Heart left ventricle (tissue), 16 donors: ENCODE measurements at regions of chr4 and their contacts with region 1.

Region 1: GRCh38 chr4:77052352-77052751 is 23.4 kb downstream of the CCNI start:
- DNase-seq: peak in 2 of 5 donors; percentile 36 to 43
- ATAC-seq: peak in 2 of 4 donors; percentile 36 to 38
- H3K4me3 ChIP-seq: no peak overlapping the region
- H3K27ac ChIP-seq: no peak overlapping the region
- H3K4me1 ChIP-seq: peaks cover 0 to 11% (median 2%) of the 10 kb centered on the region in 12 donors
- H3K27me3 ChIP-seq: no peaks in the 10 kb centered on the region
- CTCF ChIP-seq: peak; percentile 21 to 61 (median 42)
- POLR2A ChIP-seq: no peak

Region 2: DNA sequence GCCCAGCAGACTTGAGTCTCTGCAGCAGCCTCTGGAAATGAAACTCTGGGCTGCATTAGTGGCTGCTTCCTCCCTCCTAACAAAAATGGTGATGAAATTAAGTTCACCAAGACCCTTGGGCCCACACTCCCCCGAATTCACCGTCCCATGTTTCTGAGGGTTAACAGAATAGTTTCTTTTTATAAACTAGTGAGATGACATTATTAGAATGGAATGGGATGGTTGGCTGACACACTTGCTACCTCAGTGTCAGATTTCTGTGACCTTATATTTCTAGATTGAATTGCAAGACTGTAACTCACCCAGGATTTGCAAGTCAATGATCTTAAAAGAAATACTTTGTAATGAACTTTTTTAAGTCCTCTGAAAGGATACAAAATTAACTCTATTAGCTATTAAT is 490.2 kb before region 1 on chr4:
- intact Hi-C with region 1: no loop called
- DNase-seq: no peak
- ATAC-seq: peak; percentile 55 to 78 (median 66)
- H3K4me3 ChIP-seq: no peak overlapping the region
- H3K27ac ChIP-seq: peak overlapping the region in 11 of 12 donors; percentile 14 to 83 (median 44)
- H3K4me1 ChIP-seq: peaks cover 0 to 31% (median 11%) of the 10 kb centered on the region in 12 donors
- H3K27me3 ChIP-seq: no peaks in the 10 kb centered on the region
- CTCF ChIP-seq: no peak
- POLR2A ChIP-seq: no peak

Region 3: GRCh38 chr4:76982321-76983190 is 69.8 kb before region 1 on chr4:
- intact Hi-C with region 1: no loop called
- DNase-seq: no peak
- ATAC-seq: no peak
- H3K4me3 ChIP-seq: no peak overlapping the region
- H3K27ac ChIP-seq: peak overlapping the region in 2 of 12 donors; percentile 21 to 67
- H3K4me1 ChIP-seq: peaks cover 0 to 91% (median 50%) of the 10 kb centered on the region in 12 donors
- H3K27me3 ChIP-seq: no peaks in the 10 kb centered on the region
- CTCF ChIP-seq: no peak
- POLR2A ChIP-seq: no peak

Region 4: GRCh38 chr4:77203380-77204197 is 151.2 kb after region 1 on chr4:
- intact Hi-C with region 1: loop called in 9 of 10 experiments (anchors 1 to 5 kb)
- DNase-seq: peak in 4 of 5 donors; percentile 44 to 65 (median 54)
- ATAC-seq: peak; percentile 47 to 85 (median 82)
- H3K4me3 ChIP-seq: no peak overlapping the region
- H3K27ac ChIP-seq: no peak overlapping the region
- H3K4me1 ChIP-seq: peaks cover 0 to 4% (median 0%) of the 10 kb centered on the region in 12 donors
- H3K27me3 ChIP-seq: peaks cover 0 to 4% (median 0%) of the 10 kb centered on the region in 9 donors
- CTCF ChIP-seq: peak; percentile 54 to 83 (median 74)
- POLR2A ChIP-seq: no peak

Region 5: GRCh38 chr4:77358315-77358928 is 306.1 kb after region 1 on chr4:
- intact Hi-C with region 1: no loop called
- DNase-seq: peak in 1 of 5 donors; percentile 11
- ATAC-seq: peak in 3 of 4 donors; percentile 61 to 64 (median 63)
- H3K4me3 ChIP-seq: no peak overlapping the region
- H3K27ac ChIP-seq: no peak overlapping the region
- H3K4me1 ChIP-seq: no peaks in the 10 kb centered on the region
- H3K27me3 ChIP-seq: no peaks in the 10 kb centered on the region
- CTCF ChIP-seq: peak; percentile 39 to 67 (median 54)
- POLR2A ChIP-seq: no peak